Posterior vena cava (tissue), 2 donors: ENCODE measurements at regions of chr1 and their contacts with region 1.

Region 1: GRCh38 chr1:180482425-180483275 is 19.7 kb downstream of the ACBD6 start:
- DNase-seq: no peak

Region 2: GRCh38 chr1:180188091-180188506 is 294.6 kb before region 1 on chr1:
- intact Hi-C with region 1: loop called in 1 of 2 experiments (anchors 5 kb)
- DNase-seq: peak; percentile 90

Region 3: DNA sequence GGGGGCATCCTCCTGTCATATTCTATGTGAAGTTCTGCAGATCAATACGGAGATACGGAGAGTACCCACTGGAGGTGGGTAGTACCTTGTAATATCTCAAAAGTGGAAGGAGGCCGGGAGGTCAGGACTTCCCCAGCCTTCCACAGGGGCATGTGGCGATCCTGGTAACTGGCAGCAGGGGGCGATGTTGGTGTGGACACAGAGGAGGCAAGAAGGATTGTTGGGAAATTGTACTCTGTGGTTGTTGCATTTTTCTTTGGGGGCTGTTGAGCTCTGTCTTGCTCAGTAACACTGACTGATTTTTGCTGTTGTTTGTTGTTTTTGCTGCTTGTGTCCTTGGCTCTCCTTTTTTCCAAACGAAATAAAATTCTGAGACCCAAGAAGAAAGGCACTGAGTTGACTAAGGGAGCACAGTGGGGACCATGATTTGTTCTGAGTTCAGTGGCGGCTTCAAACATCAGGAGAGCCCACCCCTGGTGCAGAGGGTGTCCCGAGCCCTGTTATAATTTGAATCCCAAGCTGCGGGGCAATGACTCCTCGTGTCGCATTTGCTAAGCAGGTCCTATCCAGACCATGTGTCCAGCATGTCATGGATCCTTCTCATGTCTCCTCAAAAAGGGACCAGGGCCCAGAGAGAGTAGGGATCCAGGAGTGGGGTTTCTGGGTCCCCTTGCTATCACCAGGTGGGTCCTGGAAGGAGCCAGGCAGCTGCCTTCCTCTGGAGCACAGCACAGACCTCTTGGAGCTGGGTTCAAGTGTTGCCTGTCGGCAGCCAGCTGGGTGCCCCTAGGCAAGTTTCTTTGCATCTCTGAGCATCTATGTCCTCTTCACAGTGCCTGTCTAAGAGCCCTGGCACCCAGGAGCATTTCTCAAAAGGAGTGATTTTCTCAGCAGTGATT is 229.8 kb before region 1 on chr1:
- intact Hi-C with region 1: loop called (anchors 5 kb)
- DNase-seq: peak; percentile 92

Region 4: GRCh38 chr1:181947441-181947840 is 1464.8 kb after region 1 on chr1:
- intact Hi-C with region 1: no loop called
- DNase-seq: no peak